ENCODE measurements at regions of chr7 and their contacts with region 1.

Region 1: GRCh38 chr7:101299511-101300464 is 21.8 kb downstream of the IFT22 start:
- DNase-seq: no peak
- ATAC-seq: no peak
- H3K4me3 ChIP-seq: no peak overlapping the region
- H3K4me3 Mint-ChIP-seq: peak overlapping the region in 5 of 10 donors; percentile 51 to 66 (median 52)
- H3K27ac ChIP-seq: no peak overlapping the region
- H3K27ac Mint-ChIP-seq: no peak overlapping the region
- H3K4me1 ChIP-seq: no peaks in the 10 kb centered on the region
- H3K4me1 Mint-ChIP-seq: peaks cover 0 to 14% (median 4%) of the 10 kb centered on the region in 7 donors
- H3K27me3 ChIP-seq: peaks cover 0 to 14% of the 10 kb centered on the region in 2 donors
- H3K27me3 Mint-ChIP-seq: peaks cover 44 to 79% (median 63%) of the 10 kb centered on the region in 5 donors

Region 2: DNA sequence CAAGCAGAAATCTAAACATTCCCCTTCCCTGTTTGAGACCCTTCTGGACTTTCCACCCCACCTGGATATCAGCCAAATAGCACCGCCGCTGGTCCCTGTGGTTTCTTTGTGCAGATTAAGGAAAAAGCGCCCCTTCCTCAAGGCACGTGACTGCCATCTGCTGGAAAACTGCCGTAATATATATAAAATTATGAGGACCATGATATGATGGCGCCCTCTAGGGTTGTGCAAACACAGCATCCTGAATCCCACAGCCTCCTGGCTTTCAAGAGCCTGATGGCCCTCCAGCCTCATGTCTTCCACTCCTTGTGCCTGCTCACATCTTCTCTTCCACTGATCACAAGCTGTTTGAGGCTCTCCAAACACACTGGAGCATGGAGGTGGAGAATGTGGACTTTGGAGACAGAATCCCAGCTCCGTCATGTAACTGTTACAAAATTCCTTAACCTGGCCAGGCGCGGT is 208.0 kb after region 1 on chr7:
- CTCF ChIA-PET with region 1: no interaction called
- POLR2A ChIA-PET with region 1: no interaction called
- intact Hi-C with region 1: loop called in 1 of 2 experiments (anchors 10 kb)
- DNase-seq: peak in 7 of 9 donors; percentile 13 to 46 (median 28)
- ATAC-seq: peak; percentile 43
- H3K4me3 ChIP-seq: no peak overlapping the region
- H3K4me3 Mint-ChIP-seq: peak overlapping the region in 8 of 10 donors; percentile 18 to 72 (median 48)
- H3K27ac ChIP-seq: no peak overlapping the region
- H3K27ac Mint-ChIP-seq: peak overlapping the region in 1 of 9 donors; percentile 36
- H3K4me1 ChIP-seq: no peaks in the 10 kb centered on the region
- H3K4me1 Mint-ChIP-seq: peaks cover 5 to 20% (median 8%) of the 10 kb centered on the region in 7 donors
- H3K27me3 ChIP-seq: no peaks in the 10 kb centered on the region
- H3K27me3 Mint-ChIP-seq: peaks cover 9 to 24% (median 16%) of the 10 kb centered on the region in 5 donors

Region 3: GRCh38 chr7:101984138-101984879 is 684.5 kb after region 1 on chr7:
- CTCF ChIA-PET with region 1: no interaction called
- POLR2A ChIA-PET with region 1: no interaction called
- intact Hi-C with region 1: no loop called
- DNase-seq: no peak
- ATAC-seq: no peak
- H3K4me3 ChIP-seq: no peak overlapping the region
- H3K4me3 Mint-ChIP-seq: no peak overlapping the region
- H3K27ac ChIP-seq: no peak overlapping the region
- H3K27ac Mint-ChIP-seq: no peak overlapping the region
- H3K4me1 ChIP-seq: no peaks in the 10 kb centered on the region
- H3K4me1 Mint-ChIP-seq: peaks cover 0 to 32% (median 12%) of the 10 kb centered on the region in 7 donors
- H3K27me3 ChIP-seq: no peaks in the 10 kb centered on the region
- H3K27me3 Mint-ChIP-seq: no peaks in the 10 kb centered on the region